MCF 10A (cell line): ENCODE measurements at regions of chr2 and their contacts with region 1.

Region 1: GRCh38 chr2:102967451-102967850 is 205.6 kb downstream of the TMEM182 start:
- DNase-seq: peak; percentile 84
- H3K4me3 Mint-ChIP-seq: no peak overlapping the region
- H3K27ac Mint-ChIP-seq: no peak overlapping the region
- H3K4me1 Mint-ChIP-seq: peaks cover 14% of the 10 kb centered on the region
- H3K27me3 Mint-ChIP-seq: no peaks in the 10 kb centered on the region
- CTCF ChIP-seq: no peak

Region 2: GRCh38 chr2:102915128-102915527 is 52.3 kb before region 1 on chr2:
- CTCF ChIA-PET with region 1: no interaction called
- POLR2A ChIA-PET with region 1: interaction called, 6 read pairs
- intact Hi-C with region 1: loop called (anchors 1 kb)
- DNase-seq: peak; percentile 92
- H3K4me3 Mint-ChIP-seq: no peak overlapping the region
- H3K27ac Mint-ChIP-seq: peak overlapping the region; percentile 42
- H3K4me1 Mint-ChIP-seq: peaks cover 5% of the 10 kb centered on the region
- H3K27me3 Mint-ChIP-seq: no peaks in the 10 kb centered on the region
- CTCF ChIP-seq: no peak

Region 3: GRCh38 chr2:103159018-103159417 is 191.6 kb after region 1 on chr2:
- CTCF ChIA-PET with region 1: no interaction called
- POLR2A ChIA-PET with region 1: no interaction called
- intact Hi-C with region 1: no loop called
- DNase-seq: no peak
- H3K4me3 Mint-ChIP-seq: no peak overlapping the region
- H3K27ac Mint-ChIP-seq: no peak overlapping the region
- H3K4me1 Mint-ChIP-seq: peaks cover 11% of the 10 kb centered on the region
- H3K27me3 Mint-ChIP-seq: peaks cover 77% of the 10 kb centered on the region
- CTCF ChIP-seq: no peak